Heart right ventricle (tissue), 16 donors: ENCODE measurements at regions of chrX and their contacts with region 1.

Region 1: GRCh38 chrX:105136786-105137185 is 83.7 kb downstream of the TEX13A start:
- DNase-seq: no peak
- ATAC-seq: no peak
- H3K4me3 ChIP-seq: no peak overlapping the region
- H3K27ac ChIP-seq: no peak overlapping the region
- H3K4me1 ChIP-seq: no peaks in the 10 kb centered on the region
- H3K27me3 ChIP-seq: peaks cover 0 to 46% (median 0%) of the 10 kb centered on the region in 7 donors
- CTCF ChIP-seq: no peak

Region 2: GRCh38 chrX:104502460-104502859 is 634.3 kb before region 1 on chrX:
- intact Hi-C with region 1: loop called in 1 of 10 experiments (anchors 5 kb)
- DNase-seq: no peak
- ATAC-seq: no peak
- H3K4me3 ChIP-seq: no peak overlapping the region
- H3K27ac ChIP-seq: no peak overlapping the region
- H3K4me1 ChIP-seq: no peaks in the 10 kb centered on the region
- H3K27me3 ChIP-seq: peaks cover 0 to 9% (median 0%) of the 10 kb centered on the region in 7 donors
- CTCF ChIP-seq: no peak

Region 3: GRCh38 chrX:104742345-104742744 is 394.4 kb before region 1 on chrX:
- intact Hi-C with region 1: no loop called
- DNase-seq: no peak
- ATAC-seq: no peak
- H3K4me3 ChIP-seq: no peak overlapping the region
- H3K27ac ChIP-seq: no peak overlapping the region
- H3K4me1 ChIP-seq: no peaks in the 10 kb centered on the region
- H3K27me3 ChIP-seq: peaks cover 0 to 9% (median 0%) of the 10 kb centered on the region in 7 donors
- CTCF ChIP-seq: no peak

Region 4: GRCh38 chrX:104961926-104962325 is 174.9 kb before region 1 on chrX:
- intact Hi-C with region 1: no loop called
- DNase-seq: no peak
- ATAC-seq: no peak
- H3K4me3 ChIP-seq: no peak overlapping the region
- H3K27ac ChIP-seq: no peak overlapping the region
- H3K4me1 ChIP-seq: no peaks in the 10 kb centered on the region
- H3K27me3 ChIP-seq: peaks cover 0 to 27% (median 0%) of the 10 kb centered on the region in 7 donors
- CTCF ChIP-seq: no peak